ENCODE measurements at regions of chr12 and their contacts with region 1.

Region 1: DNA sequence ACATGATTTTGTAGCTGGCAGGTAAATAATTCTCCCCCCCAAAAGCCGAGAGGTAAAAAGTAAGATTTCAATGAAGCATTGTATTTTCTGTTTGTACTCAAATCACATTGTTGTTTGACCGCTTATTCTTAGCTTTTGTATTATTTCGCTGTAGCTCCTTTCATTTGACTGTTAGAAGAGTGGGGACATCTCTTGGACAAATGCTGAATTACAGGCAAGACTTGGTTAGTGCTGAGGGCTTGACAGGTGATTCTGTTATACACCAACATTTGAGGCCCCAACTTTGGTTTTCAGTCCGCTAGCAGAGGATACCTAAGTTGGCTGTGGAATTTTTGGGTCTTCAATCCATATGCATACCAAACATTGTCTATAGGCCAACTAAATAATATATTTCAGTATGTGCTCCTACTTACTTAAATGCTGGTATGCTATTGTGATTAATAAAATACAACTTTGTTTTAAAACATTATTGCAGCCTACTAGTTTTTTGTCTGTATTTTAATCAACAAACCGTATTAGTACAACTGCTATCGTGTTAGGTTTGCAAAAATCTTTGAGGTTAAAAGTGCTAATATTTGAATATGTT is 102.2 kb downstream of the ERC1 start:
- DNase-seq: peak in 1 of 2 experiments; percentile 78
- H3K4me3 ChIP-seq: no peak overlapping the region
- H3K4me3 Mint-ChIP-seq: no peak overlapping the region
- H3K27ac Mint-ChIP-seq: no peak overlapping the region
- H3K4me1 ChIP-seq: peaks cover 6% of the 10 kb centered on the region; the same call in 1 of the 2 replicates
- H3K4me1 Mint-ChIP-seq: peaks cover 17% of the 10 kb centered on the region
- H3K27me3 ChIP-seq: no peaks in the 10 kb centered on the region
- H3K27me3 Mint-ChIP-seq: no peaks in the 10 kb centered on the region
- CTCF ChIP-seq: peak; percentile 84 to 88

Region 2: DNA sequence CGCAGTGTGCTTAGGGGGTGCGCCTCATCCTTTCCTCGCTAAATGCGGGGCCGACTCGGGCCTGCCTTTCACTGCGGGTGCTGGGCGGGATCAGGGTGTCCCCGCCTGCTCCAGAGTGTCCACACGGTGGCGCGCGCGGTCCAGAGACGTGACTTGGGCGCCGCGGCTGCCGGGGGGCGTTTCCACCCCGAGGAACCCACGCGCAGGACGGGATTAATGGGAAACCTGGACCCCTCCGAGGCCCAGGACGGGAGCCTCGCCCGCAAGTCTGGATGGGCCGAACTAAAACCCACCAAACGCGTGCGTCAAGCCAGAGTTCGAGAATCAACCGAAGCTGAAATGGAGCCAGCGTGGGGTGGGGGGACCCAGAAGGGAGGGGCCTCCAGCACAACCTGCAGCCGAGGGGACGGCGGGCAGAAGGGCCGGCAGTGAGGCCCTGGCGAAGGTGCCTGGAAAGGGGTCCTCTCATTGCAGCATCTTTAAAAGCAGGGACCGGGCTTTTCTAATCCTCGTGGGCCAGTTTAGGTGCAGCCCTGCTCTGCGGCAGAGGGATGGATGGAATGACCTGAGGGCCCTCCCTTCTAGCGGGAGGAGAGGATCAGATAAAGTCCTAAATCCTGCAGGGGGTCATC is 523.3 kb before region 1 on chr12:
- CTCF ChIA-PET with region 1: interaction called, 18 read pairs
- POLR2A ChIA-PET with region 1: no interaction called
- intact Hi-C with region 1: loop called (anchors 10 kb)
- DNase-seq: peak; percentile 90 to 97
- H3K4me3 ChIP-seq: peak overlapping the region; percentile 80
- H3K4me3 Mint-ChIP-seq: peak overlapping the region; percentile 80
- H3K27ac Mint-ChIP-seq: peak overlapping the region; percentile 81
- H3K4me1 ChIP-seq: peaks cover 35% of the 10 kb centered on the region
- H3K4me1 Mint-ChIP-seq: peaks cover 35% of the 10 kb centered on the region
- H3K27me3 ChIP-seq: no peaks in the 10 kb centered on the region
- H3K27me3 Mint-ChIP-seq: no peaks in the 10 kb centered on the region
- CTCF ChIP-seq: peak; percentile 98 to 99

Region 3: GRCh38 chr12:789852-790563 is 303.3 kb before region 1 on chr12:
- CTCF ChIA-PET with region 1: interaction called, 12 read pairs
- POLR2A ChIA-PET with region 1: no interaction called
- intact Hi-C with region 1: no loop called
- DNase-seq: no peak
- H3K4me3 ChIP-seq: no peak overlapping the region
- H3K4me3 Mint-ChIP-seq: no peak overlapping the region
- H3K27ac Mint-ChIP-seq: peak overlapping the region; percentile 38
- H3K4me1 ChIP-seq: peaks cover 16% of the 10 kb centered on the region
- H3K4me1 Mint-ChIP-seq: peaks cover 8% of the 10 kb centered on the region
- H3K27me3 ChIP-seq: no peaks in the 10 kb centered on the region
- H3K27me3 Mint-ChIP-seq: no peaks in the 10 kb centered on the region
- CTCF ChIP-seq: no peak

Region 4: DNA sequence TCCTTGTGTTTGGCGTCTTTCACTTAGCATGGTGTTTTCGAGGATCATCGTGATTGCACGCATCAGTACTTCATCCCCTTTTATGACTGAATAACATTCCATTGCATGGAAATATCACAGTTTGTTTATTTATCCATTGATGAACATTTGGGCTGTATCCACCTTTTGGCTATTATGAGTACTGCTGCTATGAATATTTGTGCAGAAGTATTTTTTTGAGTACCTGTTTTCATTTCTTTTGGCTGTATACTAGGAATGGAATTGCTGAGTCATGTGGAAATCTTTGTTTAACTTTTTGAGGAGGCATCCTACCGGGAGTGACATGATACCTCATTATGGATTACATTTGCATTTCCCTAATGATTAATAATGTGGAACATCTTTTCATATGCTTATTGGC is 274.5 kb before region 1 on chr12:
- CTCF ChIA-PET with region 1: interaction called, 10 read pairs
- POLR2A ChIA-PET with region 1: no interaction called
- intact Hi-C with region 1: loop called (anchors 10 kb)
- DNase-seq: no peak
- H3K4me3 ChIP-seq: no peak overlapping the region
- H3K4me3 Mint-ChIP-seq: no peak overlapping the region
- H3K27ac Mint-ChIP-seq: no peak overlapping the region
- H3K4me1 ChIP-seq: no peaks in the 10 kb centered on the region
- H3K4me1 Mint-ChIP-seq: peaks cover 5% of the 10 kb centered on the region
- H3K27me3 ChIP-seq: no peaks in the 10 kb centered on the region
- H3K27me3 Mint-ChIP-seq: no peaks in the 10 kb centered on the region
- CTCF ChIP-seq: peak in 1 of 2 experiments; percentile 18

Region 5: DNA sequence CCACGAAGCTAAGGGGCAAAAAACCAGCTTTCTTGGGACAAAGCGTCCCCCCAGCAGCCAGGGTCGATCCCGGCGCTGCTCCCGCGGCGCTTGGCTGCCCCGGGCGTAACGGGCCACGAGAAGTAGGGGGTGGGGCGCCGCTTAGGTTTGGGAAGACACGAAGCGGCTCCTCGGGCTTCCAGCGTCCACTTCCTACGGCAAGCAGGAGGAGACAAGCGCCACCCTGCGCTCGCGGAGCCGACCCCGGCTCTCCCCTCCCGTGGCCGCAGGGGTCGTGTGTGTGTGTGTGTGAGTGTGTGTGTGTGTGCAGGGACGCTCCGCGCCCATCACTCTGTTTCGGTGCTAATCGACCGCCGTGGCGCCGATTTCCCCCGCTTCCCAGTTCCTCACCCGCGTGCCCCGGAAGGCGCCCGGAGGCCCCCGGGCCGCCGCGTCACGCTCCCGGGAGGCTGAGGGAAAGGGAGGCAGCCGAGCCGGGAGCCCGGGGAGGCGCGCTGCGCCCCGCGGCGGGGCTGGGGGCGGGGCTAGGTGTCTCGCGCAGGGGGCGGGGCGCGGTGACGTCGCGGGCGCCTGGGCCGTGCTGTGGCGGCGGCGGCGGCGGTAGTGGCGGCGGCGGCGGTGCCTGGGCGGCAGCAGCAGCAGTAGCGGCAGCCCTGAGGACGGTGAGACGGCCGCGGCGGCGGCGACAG is 102.5 kb before region 1 on chr12 and contains the start of gene ERC1:
- CTCF ChIA-PET with region 1: interaction called, 18 read pairs
- POLR2A ChIA-PET with region 1: interaction called, 3 read pairs
- intact Hi-C with region 1: loop called (anchors 5 kb)
- DNase-seq: peak; percentile 93 to 97
- H3K4me3 ChIP-seq: peak within 1 kb of the TSS; percentile 80
- H3K4me3 Mint-ChIP-seq: peak within 1 kb of the TSS; percentile 84
- H3K27ac Mint-ChIP-seq: peak within 1 kb of the TSS; percentile 91
- H3K4me1 ChIP-seq: peaks cover 26% of the 10 kb centered on the region
- H3K4me1 Mint-ChIP-seq: peaks cover 40% of the 10 kb centered on the region
- H3K27me3 ChIP-seq: no peaks in the 10 kb centered on the region
- H3K27me3 Mint-ChIP-seq: no peaks in the 10 kb centered on the region
- CTCF ChIP-seq: peak in 1 of 2 experiments; percentile 9
- total RNA-seq, gene ERC1: 88.4 and 111 TPM in 2 replicates

Region 6: DNA sequence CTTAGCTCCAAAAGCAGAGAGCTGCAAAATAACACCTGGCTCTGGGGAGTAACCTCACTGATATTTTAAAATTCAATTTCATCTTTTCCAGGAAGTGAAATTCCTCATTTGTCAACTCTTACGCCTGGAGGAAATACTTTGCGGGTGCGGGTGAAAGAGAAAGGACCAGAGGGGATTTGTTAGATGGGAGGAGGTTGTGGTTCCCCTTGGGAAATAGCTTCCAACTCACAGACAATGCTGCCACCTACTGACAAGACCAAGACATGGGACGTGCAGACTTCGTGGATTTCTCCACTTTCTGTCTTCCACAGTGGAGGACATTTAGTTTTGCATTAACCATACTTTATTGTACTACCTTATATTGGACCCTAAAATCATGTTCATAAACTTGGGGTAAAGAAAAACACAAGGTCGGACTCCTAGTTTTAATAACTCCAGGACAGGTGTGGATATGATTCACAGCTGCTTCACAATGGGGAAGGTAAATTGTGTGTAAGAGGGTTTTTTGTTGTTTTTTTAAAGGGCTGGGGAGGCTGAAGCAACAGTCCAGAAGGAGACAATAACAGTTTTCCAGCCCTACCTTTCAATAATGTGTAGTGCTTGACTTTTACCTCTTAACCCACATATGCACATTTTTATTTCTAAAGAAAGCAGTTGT is 490.3 kb after region 1 on chr12:
- CTCF ChIA-PET with region 1: interaction called, 13 read pairs
- POLR2A ChIA-PET with region 1: no interaction called
- intact Hi-C with region 1: no loop called
- DNase-seq: peak; percentile 82 to 87
- H3K4me3 ChIP-seq: no peak overlapping the region
- H3K4me3 Mint-ChIP-seq: no peak overlapping the region
- H3K27ac Mint-ChIP-seq: no peak overlapping the region
- H3K4me1 ChIP-seq: no peaks in the 10 kb centered on the region
- H3K4me1 Mint-ChIP-seq: peaks cover 3% of the 10 kb centered on the region
- H3K27me3 ChIP-seq: no peaks in the 10 kb centered on the region
- H3K27me3 Mint-ChIP-seq: no peaks in the 10 kb centered on the region
- CTCF ChIP-seq: peak; percentile 88 to 99